ENCODE measurements at regions of chr1 and their contacts with region 1.

Region 1: DNA sequence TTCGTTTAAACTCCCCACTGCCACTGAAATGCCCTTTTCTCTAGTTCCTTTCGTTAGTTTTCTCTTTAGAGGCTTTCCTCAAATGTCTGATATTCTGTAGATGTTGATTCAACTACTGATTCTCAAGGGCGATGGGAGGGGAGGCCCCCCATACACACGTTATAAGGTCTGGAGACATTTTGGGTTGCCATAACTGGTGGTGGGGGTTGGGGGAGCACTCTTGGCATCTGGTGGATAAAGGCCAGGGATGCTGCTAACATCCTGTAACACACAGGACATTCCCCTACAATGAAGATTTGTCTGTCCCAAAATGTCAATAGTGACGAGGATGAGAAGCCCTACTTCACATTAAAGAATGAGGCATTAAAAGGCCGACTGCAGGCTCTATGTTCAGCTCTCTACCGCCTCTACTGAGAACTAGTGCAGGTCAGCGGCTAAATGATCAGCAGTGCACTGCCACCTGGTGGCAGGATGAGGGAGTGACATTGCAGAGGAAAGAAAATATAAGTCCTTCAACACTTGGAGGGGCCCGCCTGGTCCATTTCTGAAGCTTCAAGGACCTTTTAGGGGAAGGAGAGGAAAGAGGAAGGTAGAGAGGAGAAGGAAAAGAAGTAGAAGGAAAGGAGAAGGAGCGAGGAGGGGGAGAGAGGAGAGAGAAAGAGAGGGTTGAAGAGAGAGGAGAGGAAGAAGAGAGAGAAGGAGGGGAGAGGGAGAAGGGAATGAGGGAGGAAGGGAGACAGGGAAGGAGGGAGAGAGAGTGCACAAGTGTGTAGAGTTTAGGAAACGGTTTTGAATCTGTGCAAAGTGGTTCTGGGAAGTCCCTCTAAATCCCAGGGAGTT is 29.4 kb downstream of the ALG14 start:
- DNase-seq: peak; percentile 82
- H3K4me3 Mint-ChIP-seq: no peak overlapping the region
- H3K27ac Mint-ChIP-seq: no peak overlapping the region
- H3K4me1 Mint-ChIP-seq: peaks cover 10% of the 10 kb centered on the region
- H3K27me3 Mint-ChIP-seq: no peaks in the 10 kb centered on the region
- CTCF ChIP-seq: peak; percentile 98

Region 2: GRCh38 chr1:94541175-94542087 is 501.9 kb before region 1 on chr1 and contains the start of gene F3:
- CTCF ChIA-PET with region 1: no interaction called
- POLR2A ChIA-PET with region 1: no interaction called
- intact Hi-C with region 1: loop called (anchors 5 kb)
- DNase-seq: peak; percentile 91
- H3K4me3 Mint-ChIP-seq: peak within 1 kb of the TSS; percentile 92
- H3K27ac Mint-ChIP-seq: peak within 1 kb of the TSS; percentile 97
- H3K4me1 Mint-ChIP-seq: peaks cover 64% of the 10 kb centered on the region
- H3K27me3 Mint-ChIP-seq: no peaks in the 10 kb centered on the region
- CTCF ChIP-seq: no peak
- total RNA-seq, gene F3: 173 and 296 TPM in 2 replicates

Region 3: GRCh38 chr1:94846308-94846707 is 197.1 kb before region 1 on chr1:
- CTCF ChIA-PET with region 1: interaction called, 192 read pairs
- POLR2A ChIA-PET with region 1: no interaction called
- intact Hi-C with region 1: no loop called
- DNase-seq: no peak
- H3K4me3 Mint-ChIP-seq: no peak overlapping the region
- H3K27ac Mint-ChIP-seq: no peak overlapping the region
- H3K4me1 Mint-ChIP-seq: no peaks in the 10 kb centered on the region
- H3K27me3 Mint-ChIP-seq: no peaks in the 10 kb centered on the region
- CTCF ChIP-seq: no peak

Region 4: GRCh38 chr1:94873522-94874351 is 169.6 kb before region 1 on chr1:
- CTCF ChIA-PET with region 1: interaction called, 11 read pairs
- POLR2A ChIA-PET with region 1: interaction called, 3 read pairs
- intact Hi-C with region 1: no loop called
- DNase-seq: no peak
- H3K4me3 Mint-ChIP-seq: no peak overlapping the region
- H3K27ac Mint-ChIP-seq: no peak overlapping the region
- H3K4me1 Mint-ChIP-seq: peaks cover 23% of the 10 kb centered on the region
- H3K27me3 Mint-ChIP-seq: no peaks in the 10 kb centered on the region
- CTCF ChIP-seq: no peak

Region 5: DNA sequence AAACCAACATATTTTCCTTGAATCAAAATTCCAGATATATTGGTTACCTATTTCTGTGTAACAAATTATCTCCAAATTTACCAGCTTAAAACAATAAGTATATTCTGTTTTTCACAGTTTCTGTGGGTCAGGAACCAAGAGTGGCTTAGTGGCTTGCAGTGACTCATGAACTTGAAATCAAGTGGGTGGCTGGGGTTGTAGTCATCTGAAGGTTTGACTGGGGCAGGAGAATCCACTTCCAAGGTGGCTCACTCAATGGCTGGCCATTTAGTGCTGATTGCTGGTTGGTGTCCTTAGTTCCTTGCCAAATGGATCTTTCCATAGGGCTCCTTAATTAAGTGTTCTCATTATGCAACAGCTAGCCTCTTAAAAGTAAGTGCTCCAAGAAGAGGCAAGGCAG is 14.4 kb before region 1 on chr1:
- CTCF ChIA-PET with region 1: interaction called, 13 read pairs
- POLR2A ChIA-PET with region 1: no interaction called
- intact Hi-C with region 1: no loop called
- DNase-seq: no peak
- H3K4me3 Mint-ChIP-seq: no peak overlapping the region
- H3K27ac Mint-ChIP-seq: no peak overlapping the region
- H3K4me1 Mint-ChIP-seq: peaks cover 2% of the 10 kb centered on the region
- H3K27me3 Mint-ChIP-seq: no peaks in the 10 kb centered on the region
- CTCF ChIP-seq: no peak

Region 6: GRCh38 chr1:95095833-95096217 is 52.5 kb after region 1 on chr1:
- CTCF ChIA-PET with region 1: no interaction called
- POLR2A ChIA-PET with region 1: no interaction called
- intact Hi-C with region 1: no loop called
- DNase-seq: peak; percentile 28
- H3K4me3 Mint-ChIP-seq: no peak overlapping the region
- H3K27ac Mint-ChIP-seq: no peak overlapping the region
- H3K4me1 Mint-ChIP-seq: no peaks in the 10 kb centered on the region
- H3K27me3 Mint-ChIP-seq: no peaks in the 10 kb centered on the region
- CTCF ChIP-seq: no peak